ENCODE measurements at regions of chr2 and their contacts with region 1.

Region 1: GRCh38 chr2:178280244-178280852 is 86.0 kb downstream of the OSBPL6 start:
- DNase-seq: peak; percentile 45
- ATAC-seq: peak; percentile 61
- H3K4me3 Mint-ChIP-seq: no peak overlapping the region
- H3K27ac Mint-ChIP-seq: no peak overlapping the region
- H3K4me1 Mint-ChIP-seq: no peaks in the 10 kb centered on the region
- H3K27me3 Mint-ChIP-seq: peaks cover 6% of the 10 kb centered on the region

Region 2: GRCh38 chr2:178128836-178129630 is 151.3 kb before region 1 on chr2:
- CTCF ChIA-PET with region 1: no interaction called
- POLR2A ChIA-PET with region 1: no interaction called
- intact Hi-C with region 1: loop called in 1 of 2 experiments (anchors 5 kb)
- DNase-seq: no peak
- ATAC-seq: no peak
- H3K4me3 Mint-ChIP-seq: no peak overlapping the region
- H3K27ac Mint-ChIP-seq: no peak overlapping the region
- H3K4me1 Mint-ChIP-seq: no peaks in the 10 kb centered on the region
- H3K27me3 Mint-ChIP-seq: no peaks in the 10 kb centered on the region

Measured in activated CD4-positive, alpha-beta T cell treated with anti-CD3 and anti-CD28 coated beads for 36 hours (primary cell).